ENCODE measurements at regions of chr1 and their contacts with region 1.

Region 1: GRCh38 chr1:246856371-246856770 is 75.4 kb downstream of the AHCTF1 start:
- DNase-seq: no peak
- H3K4me3 ChIP-seq: no peak overlapping the region
- H3K27ac ChIP-seq: no peak overlapping the region
- H3K4me1 ChIP-seq: no peaks in the 10 kb centered on the region
- H3K27me3 ChIP-seq: no peaks in the 10 kb centered on the region
- CTCF ChIP-seq: no peak

Region 2: GRCh38 chr1:246798606-246799515 is 57.5 kb before region 1 on chr1:
- CTCF ChIA-PET with region 1: no interaction called
- POLR2A ChIA-PET with region 1: no interaction called
- intact Hi-C with region 1: no loop called
- DNase-seq: no peak
- H3K4me3 ChIP-seq: no peak overlapping the region
- H3K27ac ChIP-seq: no peak overlapping the region
- H3K4me1 ChIP-seq: no peaks in the 10 kb centered on the region
- H3K27me3 ChIP-seq: no peaks in the 10 kb centered on the region
- CTCF ChIP-seq: no peak

Region 3: GRCh38 chr1:246809473-246809872 is 46.9 kb before region 1 on chr1:
- CTCF ChIA-PET with region 1: no interaction called
- POLR2A ChIA-PET with region 1: no interaction called
- intact Hi-C with region 1: no loop called
- DNase-seq: no peak
- H3K4me3 ChIP-seq: no peak overlapping the region
- H3K27ac ChIP-seq: no peak overlapping the region
- H3K4me1 ChIP-seq: no peaks in the 10 kb centered on the region
- H3K27me3 ChIP-seq: no peaks in the 10 kb centered on the region
- CTCF ChIP-seq: peak; percentile 39

Region 4: DNA sequence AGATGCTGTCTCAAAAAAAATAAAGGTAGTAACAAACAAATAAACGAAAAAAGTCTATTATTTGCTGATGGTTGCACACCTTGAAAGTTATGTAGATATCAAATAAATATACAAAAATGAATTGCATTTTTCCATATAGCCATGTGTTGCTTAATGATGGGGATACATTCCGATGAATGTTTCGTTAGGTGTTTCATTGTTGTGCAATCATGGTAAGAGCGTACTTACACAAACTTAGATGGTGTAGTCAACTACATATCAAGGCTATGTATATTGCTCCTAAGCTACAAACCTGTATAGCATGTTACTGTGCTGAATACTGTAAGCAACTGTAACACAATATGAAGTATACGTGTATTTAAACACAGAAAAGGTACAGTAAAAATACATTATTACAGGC is 40.9 kb after region 1 on chr1:
- CTCF ChIA-PET with region 1: no interaction called
- POLR2A ChIA-PET with region 1: no interaction called
- intact Hi-C with region 1: loop called (anchors 5 kb)
- DNase-seq: no peak
- H3K4me3 ChIP-seq: no peak overlapping the region
- H3K27ac ChIP-seq: no peak overlapping the region
- H3K4me1 ChIP-seq: no peaks in the 10 kb centered on the region
- H3K27me3 ChIP-seq: no peaks in the 10 kb centered on the region
- CTCF ChIP-seq: no peak